ENCODE measurements at regions of chr9 and their contacts with region 1.

Region 1: GRCh38 chr9:129763264-129763926 is 10.6 kb upstream of the PTGES start:
- DNase-seq: no peak
- ATAC-seq: no peak
- H3K4me3 ChIP-seq: no peak overlapping the region
- H3K27ac ChIP-seq: no peak overlapping the region
- H3K4me1 ChIP-seq: peaks cover 18 to 22% of the 10 kb centered on the region in 2 experiments; a peak in 4 of 5 replicates
- H3K27me3 ChIP-seq: no peaks in the 10 kb centered on the region
- CTCF ChIP-seq: no peak
- EP300 ChIP-seq: no peak
- POLR2A ChIP-seq: no peak
- RAD21 ChIP-seq: no peak

Region 2: DNA sequence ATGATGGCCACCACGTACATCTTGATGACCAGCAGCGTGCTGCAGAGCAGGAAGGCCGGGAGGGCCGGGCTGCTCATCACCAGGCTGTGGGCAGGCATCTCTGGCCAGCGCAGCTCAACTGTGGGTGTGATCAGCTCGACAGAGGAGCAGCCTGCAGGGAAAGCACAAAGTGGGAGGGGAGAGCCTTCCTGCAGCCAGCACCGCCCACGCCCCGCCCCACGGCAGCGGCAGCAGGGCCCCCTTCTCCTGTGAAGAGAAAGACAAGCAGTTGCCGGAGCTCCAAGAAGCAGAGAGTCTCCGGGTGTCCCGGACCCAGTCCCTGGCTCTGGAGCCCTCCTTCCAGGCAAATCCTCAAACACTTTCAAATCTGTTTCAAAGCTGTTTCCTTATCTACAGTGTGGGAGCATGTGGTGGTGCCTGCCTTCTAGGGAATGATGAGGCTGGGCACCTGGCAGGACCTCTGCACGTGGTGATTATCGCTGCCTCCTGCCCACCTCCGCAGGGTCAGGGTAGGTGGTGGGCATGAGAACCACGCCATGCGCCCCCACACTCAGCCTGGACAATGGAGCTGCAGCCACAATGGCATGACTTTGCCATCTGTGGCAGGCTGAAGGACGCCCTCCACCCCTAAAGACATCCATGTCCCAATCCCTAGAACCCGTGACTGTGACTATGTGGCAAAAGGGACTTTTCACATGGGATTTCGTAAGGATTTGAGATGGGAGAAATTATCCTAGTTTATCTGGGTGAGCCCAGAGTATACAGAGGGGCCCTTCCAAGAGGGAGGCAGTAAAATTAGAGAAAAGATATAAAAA is 10.3 kb before region 1 on chr9 and contains the start of gene PTGES:
- CTCF ChIA-PET with region 1: no interaction called
- POLR2A ChIA-PET with region 1: interaction called, 29 read pairs
- in situ Hi-C with region 1: no loop called
- intact Hi-C with region 1: no loop called
- DNase-seq: peak; percentile 81 to 91 (median 86)
- ATAC-seq: peak; percentile 92
- H3K4me3 ChIP-seq: no peak within 1 kb of the TSS
- H3K27ac ChIP-seq: no peak within 1 kb of the TSS
- H3K4me1 ChIP-seq: peaks cover 12 to 19% of the 10 kb centered on the region in 2 experiments; a peak in 4 of 5 replicates
- H3K27me3 ChIP-seq: peaks cover 37 to 72% of the 10 kb centered on the region in 2 experiments
- CTCF ChIP-seq: no peak
- EP300 ChIP-seq: no peak
- POLR2A ChIP-seq: no peak
- RAD21 ChIP-seq: no peak
- polyA plus RNA-seq, gene PTGES: not detected

Region 3: DNA sequence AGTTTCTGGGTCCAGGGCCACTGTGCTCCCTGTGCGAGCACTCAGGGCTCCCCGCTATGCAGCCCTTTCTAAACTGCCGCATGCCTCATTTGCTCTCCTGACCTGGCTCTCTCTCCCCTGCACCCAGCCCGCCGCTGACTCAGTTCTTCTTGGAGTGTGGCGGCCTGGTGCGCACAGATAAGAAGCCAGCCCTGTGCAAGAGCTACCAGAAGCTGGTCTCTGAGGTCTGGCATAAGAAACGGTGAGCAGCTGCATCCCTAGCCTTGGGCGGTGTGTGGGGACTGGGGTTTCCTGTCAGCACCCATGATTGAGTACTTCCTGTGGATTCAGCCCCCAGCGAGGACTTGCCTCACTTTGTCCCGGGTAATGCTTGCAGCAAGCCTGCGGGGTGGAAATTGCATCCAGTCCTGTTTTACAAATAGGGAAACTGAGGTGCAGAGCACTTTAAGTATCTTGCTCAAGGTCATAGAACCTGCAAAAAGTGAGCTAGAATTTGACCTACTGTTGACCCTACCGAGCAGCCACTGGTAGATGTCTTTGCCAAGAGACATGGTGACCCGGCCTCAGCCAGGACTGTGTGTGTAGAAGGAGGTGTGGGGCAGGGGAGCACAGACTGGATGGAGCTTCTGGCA is 99.8 kb after region 1 on chr9:
- CTCF ChIA-PET with region 1: no interaction called
- POLR2A ChIA-PET with region 1: no interaction called
- in situ Hi-C with region 1: no loop called
- intact Hi-C with region 1: no loop called
- DNase-seq: peak; percentile 97 to 100 (median 98)
- ATAC-seq: peak; percentile 91
- H3K4me3 ChIP-seq: peak overlapping the region; percentile 0; the same call in 1 of the 2 replicates
- H3K27ac ChIP-seq: peak overlapping the region; percentile 93
- H3K4me1 ChIP-seq: peaks cover 58 to 80% of the 10 kb centered on the region in 2 experiments
- H3K27me3 ChIP-seq: no peaks in the 10 kb centered on the region
- CTCF ChIP-seq: peak in 1 of 3 experiments; percentile 6; a peak in 2 of 6 replicates
- EP300 ChIP-seq: peak; percentile 99
- POLR2A ChIP-seq: peak; percentile 68; the same call in 1 of the 2 replicates
- RAD21 ChIP-seq: peak; percentile 67 to 70

Measured in K562 (cell line).